ENCODE measurements at regions of chr7 and their contacts with region 1.

Region 1: DNA sequence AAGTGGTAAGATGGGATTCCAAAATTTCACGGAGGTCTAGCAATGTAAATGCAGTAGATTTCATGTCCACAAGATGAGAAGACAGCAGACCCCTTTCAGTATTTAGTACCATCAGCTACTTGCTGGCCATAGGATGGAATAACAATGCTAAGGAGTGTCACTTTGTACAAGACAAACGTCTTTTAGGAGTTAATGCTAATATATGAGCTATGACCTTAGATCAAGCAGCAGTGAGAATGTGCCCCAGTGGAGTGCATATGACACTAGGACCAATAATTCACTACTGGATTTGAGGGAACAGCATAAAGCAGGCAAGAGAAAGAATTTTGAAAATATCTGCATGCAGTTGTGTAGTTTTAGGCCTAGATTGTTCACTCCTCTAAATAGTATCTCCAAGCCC is 182.8 kb upstream of the ZNF804B start:
- DNase-seq: no peak
- H3K27ac ChIP-seq: no peak overlapping the region
- CTCF ChIP-seq: no peak

Region 2: DNA sequence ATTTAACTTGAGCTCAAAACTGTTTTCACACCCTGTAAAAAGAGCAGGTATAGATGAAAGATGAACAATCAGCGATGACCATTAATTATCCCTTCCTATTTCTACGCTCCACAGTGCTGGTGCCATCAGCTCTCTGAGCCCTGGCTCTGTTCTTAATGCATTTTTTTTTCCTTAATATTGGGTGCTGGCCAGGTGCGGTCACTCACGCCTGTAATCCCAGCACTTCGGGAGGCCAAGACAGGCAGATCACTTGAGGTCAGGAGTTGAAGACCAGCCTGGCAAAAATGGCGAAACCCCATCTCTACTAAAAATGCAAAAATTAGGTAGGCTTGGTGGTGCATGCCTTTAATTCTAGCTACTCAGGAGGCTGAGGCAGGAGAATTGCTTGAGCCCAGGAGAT is 274.2 kb before region 1 on chr7:
- CTCF ChIA-PET with region 1: interaction called, 12 read pairs
- POLR2A ChIA-PET with region 1: no interaction called
- DNase-seq: no peak
- H3K27ac ChIP-seq: no peak overlapping the region
- CTCF ChIP-seq: no peak